ENCODE measurements at regions of chr11 and their contacts with region 1.

Region 1: GRCh38 chr11:45180179-45180842 is 33.9 kb downstream of the PRDM11 start:
- DNase-seq: peak in 1 of 2 donors; percentile 78
- H3K4me3 ChIP-seq: peak overlapping the region; percentile 60 to 81
- H3K27ac ChIP-seq: peak overlapping the region; percentile 95 to 97
- H3K4me1 ChIP-seq: peaks cover 22 to 30% of the 10 kb centered on the region in 2 donors
- H3K27me3 ChIP-seq: no peaks in the 10 kb centered on the region
- CTCF ChIP-seq: peak in 2 of 3 experiments; percentile 25 to 53

Region 2: DNA sequence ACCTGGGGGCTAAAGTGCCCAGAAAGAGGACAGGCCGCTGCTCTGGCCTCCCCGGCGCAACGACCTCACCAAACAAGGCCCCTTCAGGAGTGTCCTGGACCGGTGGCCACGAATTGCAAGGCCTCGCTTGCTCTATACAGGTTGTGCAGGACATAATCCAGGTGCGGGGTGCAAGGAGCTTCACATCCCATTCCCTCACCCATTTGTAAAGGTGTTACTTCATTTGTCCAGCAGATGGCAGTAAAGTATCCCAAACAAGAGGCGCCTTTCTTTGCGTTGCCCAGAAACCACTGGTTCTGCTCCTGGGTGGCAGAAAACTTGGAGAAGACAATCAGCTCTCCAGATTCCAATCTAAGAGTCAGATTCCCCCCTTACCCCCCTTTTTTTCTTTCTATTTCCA is 69.7 kb before region 1 on chr11:
- intact Hi-C with region 1: loop called (anchors 2 kb)
- DNase-seq: no peak
- H3K4me3 ChIP-seq: no peak overlapping the region
- H3K27ac ChIP-seq: no peak overlapping the region
- H3K4me1 ChIP-seq: no peaks in the 10 kb centered on the region
- H3K27me3 ChIP-seq: no peaks in the 10 kb centered on the region
- CTCF ChIP-seq: peak; percentile 68 to 79 (median 76)

Region 3: GRCh38 chr11:45147017-45147728 is 33.1 kb before region 1 on chr11:
- intact Hi-C with region 1: loop called (anchors 1 kb)
- DNase-seq: peak; percentile 89 to 98
- H3K4me3 ChIP-seq: peak overlapping the region; percentile 79 to 91
- H3K27ac ChIP-seq: peak overlapping the region; percentile 74 to 95
- H3K4me1 ChIP-seq: peaks cover 8 to 17% of the 10 kb centered on the region in 2 donors
- H3K27me3 ChIP-seq: no peaks in the 10 kb centered on the region
- CTCF ChIP-seq: no peak

Region 4: GRCh38 chr11:45163956-45164575 is 16.2 kb before region 1 on chr11:
- intact Hi-C with region 1: loop called (anchors 1 kb)
- DNase-seq: peak in 1 of 2 donors; percentile 82
- H3K4me3 ChIP-seq: no peak overlapping the region
- H3K27ac ChIP-seq: peak overlapping the region; percentile 83 to 87
- H3K4me1 ChIP-seq: peaks cover 22 to 55% of the 10 kb centered on the region in 2 donors
- H3K27me3 ChIP-seq: no peaks in the 10 kb centered on the region
- CTCF ChIP-seq: no peak

Region 5: GRCh38 chr11:45209891-45210699 is 29.8 kb after region 1 on chr11:
- intact Hi-C with region 1: loop called (anchors 1 kb)
- DNase-seq: peak; percentile 67 to 93
- H3K4me3 ChIP-seq: peak overlapping the region; percentile 16 to 30
- H3K27ac ChIP-seq: peak overlapping the region; percentile 83 to 84
- H3K4me1 ChIP-seq: peaks cover 18 to 24% of the 10 kb centered on the region in 2 donors
- H3K27me3 ChIP-seq: no peaks in the 10 kb centered on the region
- CTCF ChIP-seq: no peak

Region 6: GRCh38 chr11:45233121-45233803 is 53.0 kb after region 1 on chr11:
- intact Hi-C with region 1: loop called (anchors 2 kb)
- DNase-seq: peak in 1 of 2 donors; percentile 86
- H3K4me3 ChIP-seq: peak overlapping the region in 1 of 2 donors; percentile 33
- H3K27ac ChIP-seq: peak overlapping the region in 1 of 2 donors; percentile 26
- H3K4me1 ChIP-seq: peaks cover 3 to 7% of the 10 kb centered on the region in 2 donors
- H3K27me3 ChIP-seq: no peaks in the 10 kb centered on the region
- CTCF ChIP-seq: peak; percentile 58 to 85 (median 82)